Natural killer cell (primary cell): ENCODE measurements at regions of chr3 and their contacts with region 1.

Region 1: DNA sequence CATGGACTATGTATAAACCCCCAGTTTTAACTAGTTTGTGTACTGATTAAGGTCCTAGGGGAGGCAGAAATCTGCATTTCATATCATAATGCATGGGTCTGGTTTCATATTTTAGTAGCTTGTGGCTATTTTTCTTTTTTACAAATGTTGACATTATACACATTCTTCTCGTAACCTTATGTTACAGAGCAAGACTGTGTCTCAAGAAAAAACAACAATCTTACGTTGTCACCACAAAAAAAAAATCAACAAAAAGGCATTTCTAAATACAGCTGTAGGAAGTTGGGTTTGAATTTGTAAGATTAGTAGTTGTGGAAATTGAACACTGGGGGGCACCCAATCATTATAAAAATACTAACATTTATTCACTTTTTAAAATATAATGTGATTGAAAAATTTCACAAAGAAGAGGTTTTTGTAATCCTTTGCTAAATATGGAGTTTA is 17.9 kb downstream of the SERP1 start:
- DNase-seq: peak in 1 of 2 donors; percentile 55
- ATAC-seq: peak in 2 of 3 donors; percentile 46 to 48
- H3K4me3 ChIP-seq: no peak overlapping the region
- H3K4me3 Mint-ChIP-seq: no peak overlapping the region
- H3K27ac ChIP-seq: no peak overlapping the region
- H3K27ac Mint-ChIP-seq: no peak overlapping the region
- H3K4me1 ChIP-seq: no peaks in the 10 kb centered on the region
- H3K4me1 Mint-ChIP-seq: no peaks in the 10 kb centered on the region
- H3K27me3 ChIP-seq: no peaks in the 10 kb centered on the region
- H3K27me3 Mint-ChIP-seq: no peaks in the 10 kb centered on the region
- CTCF ChIP-seq: peak; percentile 59

Region 2: GRCh38 chr3:150870396-150870795 is 342.0 kb after region 1 on chr3:
- intact Hi-C with region 1: loop called (anchors 1 kb)
- DNase-seq: no peak
- ATAC-seq: no peak
- H3K4me3 ChIP-seq: no peak overlapping the region
- H3K4me3 Mint-ChIP-seq: no peak overlapping the region
- H3K27ac ChIP-seq: no peak overlapping the region
- H3K27ac Mint-ChIP-seq: no peak overlapping the region
- H3K4me1 ChIP-seq: no peaks in the 10 kb centered on the region
- H3K4me1 Mint-ChIP-seq: peaks cover 0 to 2% of the 10 kb centered on the region in 2 donors
- H3K27me3 ChIP-seq: no peaks in the 10 kb centered on the region
- H3K27me3 Mint-ChIP-seq: peaks cover 9 to 15% of the 10 kb centered on the region in 2 donors
- CTCF ChIP-seq: no peak

Region 3: DNA sequence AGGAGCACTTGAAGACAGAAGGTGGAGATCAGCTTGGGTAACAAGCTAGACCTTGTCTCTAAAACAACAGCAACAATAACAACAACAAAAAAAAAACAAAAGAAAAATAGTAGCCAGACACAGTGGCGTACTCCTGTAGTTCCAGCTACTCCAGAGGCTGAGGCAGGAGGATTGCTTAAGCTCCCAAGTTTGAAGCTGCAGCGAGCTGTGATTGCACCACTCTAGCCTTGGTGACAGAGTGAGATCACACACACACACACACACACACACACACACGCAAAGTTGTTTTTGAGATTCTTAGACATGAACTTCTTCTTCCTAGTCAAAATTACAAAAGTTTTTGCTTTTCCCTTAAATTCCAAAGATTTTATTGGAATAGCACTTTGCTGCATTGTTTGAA is 1025.5 kb after region 1 on chr3:
- intact Hi-C with region 1: no loop called
- DNase-seq: no peak
- ATAC-seq: no peak
- H3K4me3 ChIP-seq: no peak overlapping the region
- H3K4me3 Mint-ChIP-seq: no peak overlapping the region
- H3K27ac ChIP-seq: no peak overlapping the region
- H3K27ac Mint-ChIP-seq: no peak overlapping the region
- H3K4me1 ChIP-seq: no peaks in the 10 kb centered on the region
- H3K4me1 Mint-ChIP-seq: no peaks in the 10 kb centered on the region
- H3K27me3 ChIP-seq: no peaks in the 10 kb centered on the region
- H3K27me3 Mint-ChIP-seq: peaks cover under 1 to 5% of the 10 kb centered on the region in 2 donors
- CTCF ChIP-seq: no peak